CD4-positive, alpha-beta T cell (primary cell): ENCODE measurements at regions of chr1 and their contacts with region 1.

Region 1: GRCh38 chr1:8858888-8859706 is 19.4 kb downstream of the ENO1 start:
- DNase-seq: peak in 13 of 14 experiments; percentile 26 to 79 (median 47)
- ATAC-seq: peak; percentile 82
- H3K4me3 ChIP-seq: no peak overlapping the region
- H3K4me3 Mint-ChIP-seq: no peak overlapping the region
- H3K27ac ChIP-seq: no peak overlapping the region
- H3K27ac Mint-ChIP-seq: peak overlapping the region; percentile 15
- H3K4me1 ChIP-seq: peaks cover 13% of the 10 kb centered on the region
- H3K4me1 Mint-ChIP-seq: peaks cover 20% of the 10 kb centered on the region
- H3K27me3 ChIP-seq: no peaks in the 10 kb centered on the region
- H3K27me3 Mint-ChIP-seq: no peaks in the 10 kb centered on the region
- CTCF ChIP-seq: peak; percentile 69

Region 2: DNA sequence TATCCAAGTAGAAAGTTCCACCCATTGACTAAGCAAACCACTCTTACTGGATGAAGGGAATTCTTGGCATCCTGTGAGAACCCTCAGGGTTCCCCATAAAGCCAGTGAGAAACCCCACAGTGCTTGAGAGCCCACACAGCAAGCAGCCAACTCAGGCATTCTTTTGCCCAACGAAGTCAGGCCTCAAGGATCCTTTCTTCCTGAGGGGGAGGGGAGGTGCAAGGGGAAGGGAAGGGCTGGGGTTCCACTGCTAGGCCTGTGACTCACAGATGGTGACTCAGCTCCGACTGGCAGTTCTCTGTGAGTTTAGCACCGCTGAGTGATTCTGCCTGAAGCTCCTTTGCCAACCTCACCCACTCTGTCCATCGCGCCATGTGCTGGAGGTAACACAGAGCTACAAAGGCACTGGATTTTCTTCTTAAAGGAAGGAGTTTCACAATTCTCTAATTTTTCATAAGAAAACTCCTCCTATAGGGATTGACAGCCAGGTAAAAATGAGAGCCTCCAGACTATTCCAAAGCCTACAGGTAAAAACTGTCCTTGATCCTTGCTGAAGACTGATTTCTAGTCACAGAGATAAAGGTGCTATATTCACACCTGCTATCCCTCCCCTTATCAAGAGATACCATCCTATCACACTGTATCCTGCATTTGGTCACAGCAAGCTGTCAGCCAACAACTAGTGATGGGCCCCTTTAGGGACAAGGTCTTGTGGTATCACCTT is 14.6 kb after region 1 on chr1:
- CTCF ChIA-PET with region 1: interaction called, 22 read pairs
- POLR2A ChIA-PET with region 1: interaction called, 21 read pairs
- intact Hi-C with region 1: loop called (anchors 1 to 2 kb)
- DNase-seq: peak; percentile 13 to 88 (median 66)
- ATAC-seq: peak; percentile 8
- H3K4me3 ChIP-seq: no peak overlapping the region
- H3K4me3 Mint-ChIP-seq: peak overlapping the region; percentile 30
- H3K27ac ChIP-seq: peak overlapping the region in 1 of 2 donors; percentile 52
- H3K27ac Mint-ChIP-seq: peak overlapping the region; percentile 92
- H3K4me1 ChIP-seq: peaks cover 74% of the 10 kb centered on the region
- H3K4me1 Mint-ChIP-seq: peaks cover 67% of the 10 kb centered on the region
- H3K27me3 ChIP-seq: no peaks in the 10 kb centered on the region
- H3K27me3 Mint-ChIP-seq: no peaks in the 10 kb centered on the region
- CTCF ChIP-seq: no peak

Region 3: GRCh38 chr1:8903908-8904650 is 45.0 kb after region 1 on chr1:
- CTCF ChIA-PET with region 1: no interaction called
- POLR2A ChIA-PET with region 1: no interaction called
- intact Hi-C with region 1: no loop called
- DNase-seq: no peak
- ATAC-seq: no peak
- H3K4me3 ChIP-seq: no peak overlapping the region
- H3K4me3 Mint-ChIP-seq: no peak overlapping the region
- H3K27ac ChIP-seq: no peak overlapping the region
- H3K27ac Mint-ChIP-seq: no peak overlapping the region
- H3K4me1 ChIP-seq: peaks cover 18% of the 10 kb centered on the region
- H3K4me1 Mint-ChIP-seq: peaks cover 12% of the 10 kb centered on the region
- H3K27me3 ChIP-seq: no peaks in the 10 kb centered on the region
- H3K27me3 Mint-ChIP-seq: no peaks in the 10 kb centered on the region
- CTCF ChIP-seq: no peak

Region 4: GRCh38 chr1:8939362-8939995 is 80.4 kb after region 1 on chr1:
- CTCF ChIA-PET with region 1: no interaction called
- POLR2A ChIA-PET with region 1: no interaction called
- intact Hi-C with region 1: no loop called
- DNase-seq: no peak
- ATAC-seq: no peak
- H3K4me3 ChIP-seq: no peak overlapping the region
- H3K4me3 Mint-ChIP-seq: no peak overlapping the region
- H3K27ac ChIP-seq: no peak overlapping the region
- H3K27ac Mint-ChIP-seq: no peak overlapping the region
- H3K4me1 ChIP-seq: peaks cover 33% of the 10 kb centered on the region
- H3K4me1 Mint-ChIP-seq: peaks cover 24% of the 10 kb centered on the region
- H3K27me3 ChIP-seq: no peaks in the 10 kb centered on the region
- H3K27me3 Mint-ChIP-seq: no peaks in the 10 kb centered on the region
- CTCF ChIP-seq: no peak

Region 5: DNA sequence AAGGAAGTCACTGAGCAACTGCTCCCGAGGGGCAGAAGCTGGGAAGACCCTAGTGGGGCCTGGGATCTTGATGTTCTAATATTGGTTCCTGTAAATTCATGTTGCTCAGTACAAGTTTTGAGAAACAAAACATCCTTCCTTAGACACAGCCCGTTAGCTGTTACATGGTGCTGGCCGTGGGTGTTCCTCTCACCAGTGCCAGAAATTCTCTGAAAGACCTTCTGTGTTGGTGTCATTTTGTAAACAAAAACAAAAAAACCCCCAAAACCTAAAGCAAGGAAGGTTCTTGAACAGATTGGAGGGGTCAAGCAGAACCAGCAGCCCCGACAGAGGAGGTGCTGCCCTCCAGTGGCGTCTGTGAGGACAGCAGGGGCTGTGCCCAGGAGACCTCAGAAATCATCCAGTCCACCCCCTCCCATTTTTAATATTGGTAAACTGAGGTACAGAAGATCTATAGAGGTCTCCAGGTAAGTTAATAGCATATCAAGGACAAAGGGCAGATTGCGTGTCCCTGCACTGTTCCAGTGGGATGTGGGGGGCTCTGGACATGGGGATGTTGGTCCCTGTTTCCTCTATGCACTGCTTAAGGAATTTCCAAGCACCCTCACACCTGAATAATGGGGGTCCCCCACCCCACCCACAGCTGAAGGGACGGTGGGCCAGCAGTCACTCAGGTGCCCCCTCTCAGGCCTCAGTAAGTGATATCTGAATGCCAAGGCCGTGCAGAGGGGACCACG is 129.0 kb after region 1 on chr1:
- CTCF ChIA-PET with region 1: interaction called, 3 read pairs
- POLR2A ChIA-PET with region 1: no interaction called
- intact Hi-C with region 1: loop called in 1 of 2 experiments (anchors 2 kb)
- DNase-seq: peak; percentile 31 to 77 (median 62)
- ATAC-seq: peak; percentile 80
- H3K4me3 ChIP-seq: peak overlapping the region; percentile 0
- H3K4me3 Mint-ChIP-seq: peak overlapping the region; percentile 13
- H3K27ac ChIP-seq: no peak overlapping the region
- H3K27ac Mint-ChIP-seq: peak overlapping the region; percentile 15
- H3K4me1 ChIP-seq: peaks cover 21% of the 10 kb centered on the region
- H3K4me1 Mint-ChIP-seq: peaks cover 15% of the 10 kb centered on the region
- H3K27me3 ChIP-seq: no peaks in the 10 kb centered on the region
- H3K27me3 Mint-ChIP-seq: no peaks in the 10 kb centered on the region
- CTCF ChIP-seq: peak; percentile 97